SK-N-SH (cell line): ENCODE measurements at regions of chr17 and their contacts with region 1.

Region 1: DNA sequence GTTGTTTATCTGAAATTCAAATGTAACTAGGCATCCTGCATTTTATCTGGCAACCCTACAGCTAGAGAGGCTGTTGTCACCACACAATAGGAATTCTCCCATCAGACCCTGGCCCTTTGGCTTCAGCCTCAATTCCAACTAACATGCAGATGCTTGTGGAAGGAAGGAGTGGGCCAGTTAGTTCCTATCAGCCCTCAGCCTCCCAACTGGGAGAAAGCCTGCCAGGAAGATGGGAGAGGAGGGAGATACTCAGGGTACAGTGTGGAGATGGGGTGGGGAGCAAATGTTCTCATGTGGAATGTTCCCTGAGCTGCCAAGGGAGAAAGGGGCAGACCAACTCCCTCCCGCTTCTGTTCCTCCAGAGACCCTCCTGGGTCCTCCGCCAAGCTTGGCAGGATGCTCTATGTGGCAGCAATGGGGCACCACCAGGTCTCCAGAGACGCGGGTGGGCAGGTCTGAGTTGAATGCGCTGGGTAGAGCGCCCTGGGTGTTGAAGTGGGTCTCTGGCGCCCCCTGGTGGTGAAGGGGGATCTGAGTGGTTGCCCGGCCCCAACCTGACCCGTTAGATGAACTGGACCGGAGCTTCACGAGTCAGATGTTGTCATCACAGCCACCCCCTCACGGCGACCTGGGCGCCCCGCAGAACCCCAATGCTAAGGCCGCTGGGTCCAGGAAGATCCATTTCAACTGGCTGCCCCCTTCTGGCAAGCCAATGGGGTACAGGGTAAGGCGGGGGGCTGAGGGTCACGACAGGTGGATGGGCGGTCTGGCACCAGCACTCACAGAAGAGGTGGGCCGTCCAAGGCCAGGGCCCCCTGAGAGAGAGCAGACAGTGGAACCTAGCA is 15.2 kb downstream of the GALK1 start:
- DNase-seq: peak; percentile 94
- H3K4me3 ChIP-seq: peak overlapping the region in 1 of 2 experiments; percentile 30; a peak in 2 of 4 replicates
- H3K27ac ChIP-seq: no peak overlapping the region
- H3K4me1 ChIP-seq: peaks cover 0 to 23% of the 10 kb centered on the region in 2 experiments; a peak in 1 of 4 replicates
- H3K27me3 ChIP-seq: no peaks in the 10 kb centered on the region
- CTCF ChIP-seq: peak; percentile 99
- EP300 ChIP-seq: no peak
- RAD21 ChIP-seq: peak; percentile 82

Region 2: GRCh38 chr17:75515496-75516254 is 234.1 kb before region 1 on chr17 and contains the start of gene CASKIN2:
- CTCF ChIA-PET with region 1: interaction called, 13 read pairs
- POLR2A ChIA-PET with region 1: no interaction called
- DNase-seq: peak; percentile 100
- H3K4me3 ChIP-seq: peak within 1 kb of the TSS; percentile 81 to 98
- H3K27ac ChIP-seq: peak within 1 kb of the TSS; percentile 45 to 88; a peak in 3 of 4 replicates
- H3K4me1 ChIP-seq: peaks cover 0 to 33% of the 10 kb centered on the region in 2 experiments; a peak in 1 of 4 replicates
- H3K27me3 ChIP-seq: no peaks in the 10 kb centered on the region
- CTCF ChIP-seq: peak; percentile 100
- EP300 ChIP-seq: no peak; a peak in 1 of 4 replicates
- RAD21 ChIP-seq: peak; percentile 71
- polyA plus RNA-seq, gene CASKIN2: 5.2 and 6.5 TPM in 2 replicates

Region 3: GRCh38 chr17:75619506-75620431 is 130.0 kb before region 1 on chr17:
- CTCF ChIA-PET with region 1: interaction called, 1,370 read pairs
- POLR2A ChIA-PET with region 1: no interaction called
- DNase-seq: peak; percentile 89
- H3K4me3 ChIP-seq: no peak overlapping the region; a peak in 1 of 4 replicates
- H3K27ac ChIP-seq: no peak overlapping the region
- H3K4me1 ChIP-seq: peaks cover 0 to 24% of the 10 kb centered on the region in 2 experiments; a peak in 1 of 4 replicates
- H3K27me3 ChIP-seq: no peaks in the 10 kb centered on the region
- CTCF ChIP-seq: peak; percentile 73
- EP300 ChIP-seq: no peak
- RAD21 ChIP-seq: peak; percentile 41

Region 4: GRCh38 chr17:75679706-75680442 is 69.9 kb before region 1 on chr17:
- CTCF ChIA-PET with region 1: interaction called, 297 read pairs
- POLR2A ChIA-PET with region 1: interaction called, 4 read pairs
- DNase-seq: no peak
- H3K4me3 ChIP-seq: no peak overlapping the region
- H3K27ac ChIP-seq: peak overlapping the region in 1 of 2 experiments; percentile 64; a peak in 2 of 4 replicates
- H3K4me1 ChIP-seq: peaks cover 5 to 34% of the 10 kb centered on the region in 2 experiments; a peak in 3 of 4 replicates
- H3K27me3 ChIP-seq: no peaks in the 10 kb centered on the region
- CTCF ChIP-seq: peak; percentile 36
- EP300 ChIP-seq: no peak
- RAD21 ChIP-seq: peak; percentile 28; the same call in 1 of the 2 replicates

Region 5: GRCh38 chr17:75738218-75738802 is 11.5 kb before region 1 on chr17:
- CTCF ChIA-PET with region 1: interaction called, 419 read pairs
- POLR2A ChIA-PET with region 1: no interaction called
- DNase-seq: no peak
- H3K4me3 ChIP-seq: no peak overlapping the region
- H3K27ac ChIP-seq: no peak overlapping the region
- H3K4me1 ChIP-seq: no peaks in the 10 kb centered on the region; a peak in 1 of 4 replicates
- H3K27me3 ChIP-seq: no peaks in the 10 kb centered on the region
- CTCF ChIP-seq: no peak
- EP300 ChIP-seq: no peak
- RAD21 ChIP-seq: no peak

Region 6: GRCh38 chr17:75791254-75791653 is 41.5 kb after region 1 on chr17:
- CTCF ChIA-PET with region 1: interaction called, 41 read pairs
- POLR2A ChIA-PET with region 1: no interaction called
- DNase-seq: no peak
- H3K4me3 ChIP-seq: no peak overlapping the region
- H3K27ac ChIP-seq: no peak overlapping the region
- H3K4me1 ChIP-seq: peaks cover 0 to 9% of the 10 kb centered on the region in 2 experiments; a peak in 3 of 4 replicates
- H3K27me3 ChIP-seq: no peaks in the 10 kb centered on the region
- CTCF ChIP-seq: no peak
- EP300 ChIP-seq: no peak
- RAD21 ChIP-seq: no peak

Region 7: DNA sequence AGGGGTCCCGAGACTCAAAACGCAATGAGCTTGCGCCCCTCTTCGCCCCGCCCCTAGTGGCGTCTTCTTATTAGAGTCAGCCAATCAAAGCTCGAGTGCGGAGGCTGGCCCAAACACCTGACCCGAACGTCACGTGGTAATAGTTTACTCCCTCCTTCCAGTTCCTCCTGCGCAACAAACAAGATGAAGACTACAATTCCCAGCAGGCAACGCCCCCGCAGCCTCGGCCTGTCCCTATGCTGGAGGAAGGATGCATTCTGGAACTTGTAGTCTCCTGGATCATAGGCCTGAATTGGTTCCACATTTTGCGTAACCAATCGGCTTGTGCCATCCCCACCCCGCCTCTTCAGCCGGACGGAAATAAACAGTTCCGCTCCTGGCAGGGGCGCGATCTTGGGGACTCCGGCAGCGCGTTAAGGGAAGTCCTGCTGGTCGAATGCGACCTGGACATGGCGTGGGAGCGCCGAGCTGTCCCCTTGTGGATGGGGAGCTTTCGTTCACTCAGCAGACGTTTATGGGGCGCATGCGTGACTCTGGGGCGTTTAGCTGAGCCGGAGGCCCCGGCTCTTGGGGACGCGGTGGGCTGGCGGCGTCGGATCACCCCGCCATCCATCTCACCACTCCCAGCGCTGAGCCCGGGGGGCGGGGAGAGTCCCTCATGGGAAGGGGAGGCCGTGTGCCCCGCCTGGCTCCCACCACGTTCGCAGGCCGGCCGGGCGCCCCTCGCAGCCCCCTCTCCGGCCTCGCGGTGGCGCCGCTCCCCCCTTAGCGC is 105.7 kb after region 1 on chr17 and contains the start of gene WBP2:
- CTCF ChIA-PET with region 1: interaction called, 12 read pairs
- POLR2A ChIA-PET with region 1: no interaction called
- DNase-seq: peak; percentile 97
- H3K4me3 ChIP-seq: peak within 1 kb of the TSS; percentile 72 to 83
- H3K27ac ChIP-seq: peak within 1 kb of the TSS; percentile 86 to 88
- H3K4me1 ChIP-seq: peaks cover 12 to 19% of the 10 kb centered on the region in 2 experiments; a peak in 3 of 4 replicates
- H3K27me3 ChIP-seq: no peaks in the 10 kb centered on the region
- CTCF ChIP-seq: peak; percentile 70
- EP300 ChIP-seq: no peak
- RAD21 ChIP-seq: no peak; the same call in none of the 2 replicates
- polyA plus RNA-seq, gene WBP2: 49.7 and 55.8 TPM in 2 replicates

Region 8: GRCh38 chr17:75978938-75979704 is 229.4 kb after region 1 on chr17 and contains the starts of genes ACOX1 and TEN1:
- CTCF ChIA-PET with region 1: no interaction called
- POLR2A ChIA-PET with region 1: no interaction called
- DNase-seq: peak; percentile 97
- H3K4me3 ChIP-seq: peak within 1 kb of the TSS; percentile 68 to 87
- H3K27ac ChIP-seq: peak within 1 kb of the TSS; percentile 96 to 98
- H3K4me1 ChIP-seq: peaks cover 0 to 20% of the 10 kb centered on the region in 2 experiments; a peak in 3 of 4 replicates
- H3K27me3 ChIP-seq: no peaks in the 10 kb centered on the region
- CTCF ChIP-seq: peak; percentile 39; the same call in 1 of the 2 replicates
- EP300 ChIP-seq: peak; percentile 37 to 43; a peak in 2 of 4 replicates
- RAD21 ChIP-seq: no peak
- polyA plus RNA-seq, gene ACOX1: 21.5 and 29.7 TPM in 2 replicates
- polyA plus RNA-seq, gene TEN1: 33.6 and 38.1 TPM in 2 replicates